Heart left ventricle (tissue), 16 donors: ENCODE measurements at regions of chr7 and their contacts with region 1.

Region 1: GRCh38 chr7:28955718-28956619 is 2.2 kb downstream of the TRIL start:
- DNase-seq: peak; percentile 80 to 90 (median 86)
- ATAC-seq: peak in 3 of 4 donors; percentile 38 to 71 (median 67)
- H3K4me3 ChIP-seq: peak overlapping the region; percentile 42 to 73 (median 62)
- H3K27ac ChIP-seq: peak overlapping the region; percentile 10 to 79 (median 65)
- H3K4me1 ChIP-seq: peaks cover 5 to 54% (median 40%) of the 10 kb centered on the region in 12 donors
- H3K27me3 ChIP-seq: peaks cover 0 to 48% (median 0%) of the 10 kb centered on the region in 9 donors
- CTCF ChIP-seq: peak; percentile 44 to 72 (median 56)
- POLR2A ChIP-seq: no peak

Region 2: GRCh38 chr7:28926871-28927597 is 28.9 kb before region 1 on chr7:
- intact Hi-C with region 1: loop called in 6 of 10 experiments (anchors 1 to 2 kb)
- DNase-seq: peak; percentile 76 to 82 (median 79)
- ATAC-seq: peak; percentile 78 to 95 (median 94)
- H3K4me3 ChIP-seq: peak overlapping the region; percentile 8 to 64 (median 52)
- H3K27ac ChIP-seq: peak overlapping the region in 11 of 12 donors; percentile 15 to 63 (median 49)
- H3K4me1 ChIP-seq: peaks cover 0 to 22% (median 15%) of the 10 kb centered on the region in 12 donors
- H3K27me3 ChIP-seq: peaks cover 0 to 8% (median 0%) of the 10 kb centered on the region in 9 donors
- CTCF ChIP-seq: peak; percentile 72 to 90 (median 84)
- POLR2A ChIP-seq: no peak

Region 3: DNA sequence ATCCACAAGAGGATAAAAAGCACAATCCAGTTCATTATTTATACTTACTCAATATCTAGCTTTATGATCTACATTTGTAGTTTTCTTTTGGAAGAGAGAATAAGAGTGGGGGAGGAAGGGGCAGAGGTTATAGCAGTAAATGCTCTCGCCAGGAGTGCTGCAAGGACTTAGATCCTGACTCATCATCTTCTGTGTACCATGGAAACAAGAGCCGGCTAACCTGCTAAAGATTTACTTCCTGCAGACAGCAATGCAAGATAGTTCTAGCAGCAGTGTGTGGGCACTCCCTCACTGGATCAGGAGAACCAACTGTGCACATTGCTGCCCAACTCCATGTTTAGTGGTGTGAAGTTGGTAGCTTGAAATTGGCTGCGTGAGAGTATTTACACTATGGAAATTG is 49.9 kb after region 1 on chr7:
- intact Hi-C with region 1: loop called in 4 of 10 experiments (anchors 5 to 10 kb)
- DNase-seq: no peak
- ATAC-seq: peak in 1 of 4 donors; percentile 34
- H3K4me3 ChIP-seq: no peak overlapping the region
- H3K27ac ChIP-seq: no peak overlapping the region
- H3K4me1 ChIP-seq: peaks cover 0 to 31% (median 3%) of the 10 kb centered on the region in 12 donors
- H3K27me3 ChIP-seq: no peaks in the 10 kb centered on the region
- CTCF ChIP-seq: no peak
- POLR2A ChIP-seq: no peak

Region 4: DNA sequence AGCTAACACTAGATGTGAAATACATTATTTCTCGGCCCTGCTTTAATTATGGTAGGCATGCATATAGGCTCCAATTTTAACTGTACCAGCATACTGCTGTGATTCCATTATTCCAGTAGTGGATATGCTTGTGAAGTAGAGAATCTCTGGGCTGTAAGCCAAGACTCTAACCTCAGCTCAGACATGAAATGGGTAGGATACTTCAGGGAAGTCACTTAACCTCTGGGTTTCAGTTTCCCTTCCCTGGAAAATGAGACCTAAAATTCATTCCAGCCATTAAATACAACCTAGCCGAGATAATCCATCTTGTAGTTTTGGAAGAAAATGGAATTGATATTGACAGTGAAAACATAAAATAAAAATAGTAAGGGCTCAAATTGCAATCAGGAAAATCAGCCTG is 61.7 kb after region 1 on chr7:
- intact Hi-C with region 1: loop called in 4 of 10 experiments (anchors 1 to 10 kb)
- DNase-seq: no peak
- ATAC-seq: peak in 3 of 4 donors; percentile 29 to 41 (median 41)
- H3K4me3 ChIP-seq: no peak overlapping the region
- H3K27ac ChIP-seq: peak overlapping the region in 1 of 12 donors; percentile 38
- H3K4me1 ChIP-seq: peaks cover 0 to 33% (median 11%) of the 10 kb centered on the region in 12 donors
- H3K27me3 ChIP-seq: no peaks in the 10 kb centered on the region
- CTCF ChIP-seq: no peak
- POLR2A ChIP-seq: no peak

Region 5: DNA sequence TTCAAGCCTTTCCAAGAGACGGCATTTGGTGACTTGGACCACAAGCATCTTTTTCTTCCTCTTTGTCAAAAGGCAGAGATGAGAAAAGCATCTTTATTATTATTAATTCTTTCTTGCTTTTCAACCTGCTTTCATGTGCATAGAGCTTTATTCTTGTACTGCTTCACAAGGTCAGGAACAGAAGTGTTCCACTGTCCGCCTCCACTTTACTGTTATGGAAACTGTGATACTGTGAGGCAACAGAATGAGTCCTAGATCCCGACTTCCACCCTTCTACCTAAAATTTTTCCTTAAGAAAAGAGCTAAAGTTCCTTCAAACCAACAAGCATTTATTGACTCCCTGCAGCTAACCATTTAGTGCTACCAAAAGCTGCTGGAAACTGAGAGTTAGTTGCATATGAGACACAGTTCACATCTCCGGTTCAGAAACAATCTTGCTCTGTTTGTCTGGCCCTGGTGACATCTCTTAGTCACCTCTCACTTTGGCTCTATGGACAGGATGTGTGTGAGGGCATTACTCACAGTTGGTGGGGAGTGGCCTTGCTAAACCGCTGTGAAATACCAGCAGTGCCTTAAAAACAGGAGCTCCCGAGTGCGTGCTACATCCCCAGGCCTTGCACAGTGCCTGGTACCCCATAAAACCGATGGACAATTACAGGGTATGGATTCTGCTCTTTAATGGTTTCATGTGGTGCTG is 79.2 kb after region 1 on chr7:
- intact Hi-C with region 1: loop called in 1 of 10 experiments (anchors 2 kb)
- DNase-seq: no peak
- ATAC-seq: peak; percentile 43 to 85 (median 79)
- H3K4me3 ChIP-seq: no peak overlapping the region
- H3K27ac ChIP-seq: peak overlapping the region in 5 of 12 donors; percentile 5 to 52 (median 20)
- H3K4me1 ChIP-seq: peaks cover 0 to 49% (median 21%) of the 10 kb centered on the region in 12 donors
- H3K27me3 ChIP-seq: no peaks in the 10 kb centered on the region
- CTCF ChIP-seq: no peak
- POLR2A ChIP-seq: no peak

Region 6: GRCh38 chr7:29105752-29106668 is 150.0 kb after region 1 on chr7:
- intact Hi-C with region 1: loop called in 8 of 10 experiments (anchors 1 to 10 kb)
- DNase-seq: peak in 2 of 5 donors; percentile 53
- ATAC-seq: peak; percentile 70 to 81 (median 80)
- H3K4me3 ChIP-seq: no peak overlapping the region
- H3K27ac ChIP-seq: no peak overlapping the region
- H3K4me1 ChIP-seq: peaks cover 0 to 30% (median 5%) of the 10 kb centered on the region in 12 donors
- H3K27me3 ChIP-seq: no peaks in the 10 kb centered on the region
- CTCF ChIP-seq: peak; percentile 68 to 91 (median 85)
- POLR2A ChIP-seq: no peak